PC-9 (cell line): ENCODE measurements at regions of chr20 and their contacts with region 1.

Region 1: DNA sequence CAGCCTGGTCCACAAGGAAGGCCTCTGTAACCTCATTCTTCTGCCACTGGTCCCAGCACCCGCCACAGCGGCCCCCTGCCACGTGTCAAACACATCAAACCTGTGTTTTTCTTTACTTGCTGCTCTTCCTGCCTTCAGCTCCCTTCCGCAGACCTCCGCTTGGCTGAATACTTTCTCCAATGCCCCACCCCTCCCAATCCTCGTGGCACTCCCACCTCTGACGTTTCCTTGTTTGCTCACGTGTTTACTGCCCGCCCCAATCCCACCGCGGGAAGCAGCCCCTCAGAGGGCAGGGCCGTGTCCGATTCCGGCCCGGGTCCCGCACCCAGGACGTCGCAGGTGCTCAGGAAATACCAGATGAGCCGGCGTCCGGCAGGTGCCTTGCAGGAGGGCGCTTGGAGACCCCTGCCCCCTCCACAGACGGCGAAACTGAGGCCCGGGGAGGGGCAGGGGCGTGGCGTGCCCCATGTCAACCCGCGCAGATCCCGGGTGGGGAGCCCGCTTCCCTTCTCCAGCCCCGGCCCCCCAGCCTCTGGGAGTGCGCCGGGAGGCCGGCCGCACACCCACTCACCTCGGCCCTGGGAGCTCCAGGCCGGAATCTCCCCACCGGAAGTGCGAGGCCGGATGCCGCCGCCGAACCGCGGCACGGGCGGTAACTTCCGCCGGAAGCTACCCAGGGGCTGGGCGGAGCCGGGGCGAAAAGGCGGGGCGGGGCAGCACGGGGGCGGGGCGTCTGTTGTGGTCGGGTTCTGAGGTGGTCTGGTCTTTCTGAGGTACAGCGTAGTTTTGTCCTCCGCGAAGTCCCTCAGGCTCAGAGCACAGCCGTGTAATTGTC is 42.4 kb downstream of the ELMO2 start:
- DNase-seq: peak; percentile 87 to 88
- H3K4me3 ChIP-seq: peak overlapping the region; percentile 90
- H3K27ac ChIP-seq: peak overlapping the region; percentile 82
- H3K4me1 ChIP-seq: peaks cover 27% of the 10 kb centered on the region
- H3K27me3 ChIP-seq: no peaks in the 10 kb centered on the region
- CTCF ChIP-seq: no peak

Region 2: GRCh38 chr20:45080867-45081624 is 1283.0 kb before region 1 on chr20:
- CTCF ChIA-PET with region 1: no interaction called
- POLR2A ChIA-PET with region 1: interaction called, 11 read pairs
- intact Hi-C with region 1: no loop called
- DNase-seq: no peak
- H3K4me3 ChIP-seq: no peak overlapping the region
- H3K27ac ChIP-seq: no peak overlapping the region
- H3K4me1 ChIP-seq: no peaks in the 10 kb centered on the region
- H3K27me3 ChIP-seq: no peaks in the 10 kb centered on the region
- CTCF ChIP-seq: peak; percentile 68

Region 3: DNA sequence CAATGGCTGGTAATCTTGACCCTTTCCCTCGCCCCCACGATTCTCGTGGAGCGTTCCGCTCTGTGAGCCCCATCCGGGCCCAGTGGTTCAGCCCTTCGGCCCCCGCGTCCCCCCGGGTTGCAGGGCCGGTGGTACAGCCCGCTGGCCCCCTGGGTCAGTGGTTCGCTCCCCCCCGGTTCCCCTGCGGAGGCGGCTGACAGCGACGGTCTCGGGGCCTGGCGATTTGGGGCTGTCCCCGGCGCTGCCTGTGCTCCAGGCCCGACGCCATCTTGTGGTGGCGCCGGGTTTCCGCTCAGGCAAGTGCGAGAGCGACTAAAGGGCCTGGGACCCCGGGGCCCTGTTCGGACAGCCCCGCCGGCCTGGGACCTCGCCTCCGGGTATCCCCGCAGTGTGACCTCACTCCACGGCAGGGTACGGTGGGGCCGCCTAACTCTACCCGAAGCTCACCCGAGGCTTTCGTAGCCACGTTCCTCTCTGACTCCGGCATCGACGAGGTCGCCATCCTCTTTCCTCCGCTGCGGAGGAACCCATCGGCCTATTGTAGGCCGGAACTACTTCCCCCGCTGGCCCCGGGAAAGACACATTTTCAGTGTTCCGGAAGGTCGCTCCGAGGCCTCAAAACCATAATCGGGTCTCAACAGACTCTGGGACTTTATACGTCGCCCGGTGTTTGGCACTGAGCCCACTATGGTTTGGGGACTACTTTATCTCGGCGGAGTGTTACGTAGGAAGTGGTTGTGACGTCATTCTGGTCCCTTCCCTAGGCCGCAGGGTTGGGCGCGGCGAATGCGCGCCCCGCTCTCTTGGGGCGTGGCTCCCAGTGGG is 392.1 kb before region 1 on chr20 and contains the start of gene ZNF335:
- CTCF ChIA-PET with region 1: no interaction called
- POLR2A ChIA-PET with region 1: interaction called, 5 read pairs
- intact Hi-C with region 1: loop called (anchors 5 kb)
- DNase-seq: peak; percentile 91 to 98
- H3K4me3 ChIP-seq: peak within 1 kb of the TSS; percentile 79
- H3K27ac ChIP-seq: peak within 1 kb of the TSS; percentile 98
- H3K4me1 ChIP-seq: peaks cover 24% of the 10 kb centered on the region
- H3K27me3 ChIP-seq: no peaks in the 10 kb centered on the region
- CTCF ChIP-seq: peak; percentile 60
- total RNA-seq, gene ZNF335: 14.1 and 16.3 TPM in 2 replicates

Region 4: GRCh38 chr20:46333161-46333991 is 30.6 kb before region 1 on chr20:
- CTCF ChIA-PET with region 1: interaction called, 10 read pairs
- POLR2A ChIA-PET with region 1: no interaction called
- intact Hi-C with region 1: no loop called
- DNase-seq: no peak
- H3K4me3 ChIP-seq: no peak overlapping the region
- H3K27ac ChIP-seq: no peak overlapping the region
- H3K4me1 ChIP-seq: no peaks in the 10 kb centered on the region
- H3K27me3 ChIP-seq: peaks cover 96% of the 10 kb centered on the region
- CTCF ChIP-seq: no peak

Region 5: GRCh38 chr20:46349035-46349741 is 14.8 kb before region 1 on chr20:
- CTCF ChIA-PET with region 1: interaction called, 4 read pairs
- POLR2A ChIA-PET with region 1: interaction called, 6 read pairs
- intact Hi-C with region 1: loop called (anchors 1 kb)
- DNase-seq: peak in 1 of 2 experiments; percentile 46
- H3K4me3 ChIP-seq: no peak overlapping the region
- H3K27ac ChIP-seq: no peak overlapping the region
- H3K4me1 ChIP-seq: no peaks in the 10 kb centered on the region; the same call in 1 of the 2 replicates
- H3K27me3 ChIP-seq: no peaks in the 10 kb centered on the region
- CTCF ChIP-seq: peak; percentile 77

Region 6: GRCh38 chr20:46406199-46406985 is 42.4 kb after region 1 on chr20 and contains the start of gene ELMO2:
- CTCF ChIA-PET with region 1: no interaction called
- POLR2A ChIA-PET with region 1: interaction called, 4 read pairs
- intact Hi-C with region 1: loop called (anchors 2 kb)
- DNase-seq: peak; percentile 93 to 96
- H3K4me3 ChIP-seq: peak within 1 kb of the TSS; percentile 93
- H3K27ac ChIP-seq: no peak within 1 kb of the TSS
- H3K4me1 ChIP-seq: peaks cover 29% of the 10 kb centered on the region
- H3K27me3 ChIP-seq: no peaks in the 10 kb centered on the region
- CTCF ChIP-seq: peak; percentile 49
- total RNA-seq, gene ELMO2: 29.4 and 32.1 TPM in 2 replicates